ENCODE measurements at regions of chr2 and their contacts with region 1.

Region 1: GRCh38 chr2:189521699-189522434 is 58.7 kb downstream of the SLC40A1 start:
- DNase-seq: no peak
- ATAC-seq: no peak
- H3K4me3 ChIP-seq: no peak overlapping the region
- H3K27ac ChIP-seq: peak overlapping the region in 6 of 12 donors; percentile 4 to 72 (median 32)
- H3K4me1 ChIP-seq: peaks cover 0 to 25% (median 9%) of the 10 kb centered on the region in 12 donors
- H3K27me3 ChIP-seq: no peaks in the 10 kb centered on the region
- CTCF ChIP-seq: peak in 1 of 12 donors; percentile 12
- POLR2A ChIP-seq: no peak

Region 2: DNA sequence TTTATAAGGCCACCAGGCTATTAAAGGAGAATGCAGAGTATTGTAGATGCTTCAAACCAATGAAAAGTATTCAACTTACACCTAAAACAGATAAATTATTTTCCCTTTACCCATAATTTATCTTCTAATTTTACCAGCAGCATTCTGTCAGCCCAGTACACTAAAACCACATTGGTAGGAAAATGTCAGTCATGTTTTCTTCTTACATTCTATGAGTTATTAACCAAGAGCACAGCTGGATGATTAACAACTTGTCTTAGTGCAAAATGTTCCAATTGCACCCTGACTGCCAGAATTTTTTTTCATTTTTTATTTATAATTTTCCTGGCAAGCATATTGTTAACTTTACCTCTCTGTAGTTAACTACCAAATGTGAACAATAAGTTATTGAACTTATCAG is 159.6 kb before region 1 on chr2:
- intact Hi-C with region 1: no loop called
- DNase-seq: no peak
- ATAC-seq: no peak
- H3K4me3 ChIP-seq: no peak overlapping the region
- H3K27ac ChIP-seq: peak overlapping the region in 3 of 12 donors; percentile 5 to 30 (median 28)
- H3K4me1 ChIP-seq: no peaks in the 10 kb centered on the region
- H3K27me3 ChIP-seq: no peaks in the 10 kb centered on the region
- CTCF ChIP-seq: no peak
- POLR2A ChIP-seq: no peak

Region 3: GRCh38 chr2:189549449-189549832 is 27.6 kb after region 1 on chr2:
- intact Hi-C with region 1: no loop called
- DNase-seq: peak in 4 of 5 donors; percentile 34 to 67 (median 53)
- ATAC-seq: peak; percentile 31 to 71 (median 53)
- H3K4me3 ChIP-seq: no peak overlapping the region
- H3K27ac ChIP-seq: peak overlapping the region in 10 of 12 donors; percentile 40 to 88 (median 54)
- H3K4me1 ChIP-seq: peaks cover 0 to 73% (median 33%) of the 10 kb centered on the region in 12 donors
- H3K27me3 ChIP-seq: no peaks in the 10 kb centered on the region
- CTCF ChIP-seq: no peak
- POLR2A ChIP-seq: no peak

Region 4: GRCh38 chr2:189569295-189569910 is 47.5 kb after region 1 on chr2:
- intact Hi-C with region 1: loop called in 1 of 10 experiments (anchors 5 kb)
- DNase-seq: peak in 1 of 5 donors; percentile 39
- ATAC-seq: peak in 2 of 4 donors; percentile 59 to 72
- H3K4me3 ChIP-seq: no peak overlapping the region
- H3K27ac ChIP-seq: peak overlapping the region in 10 of 12 donors; percentile 19 to 65 (median 46)
- H3K4me1 ChIP-seq: peaks cover 3 to 80% (median 29%) of the 10 kb centered on the region in 12 donors
- H3K27me3 ChIP-seq: no peaks in the 10 kb centered on the region
- CTCF ChIP-seq: peak in 5 of 12 donors; percentile 17 to 44 (median 26)
- POLR2A ChIP-seq: no peak

Region 5: DNA sequence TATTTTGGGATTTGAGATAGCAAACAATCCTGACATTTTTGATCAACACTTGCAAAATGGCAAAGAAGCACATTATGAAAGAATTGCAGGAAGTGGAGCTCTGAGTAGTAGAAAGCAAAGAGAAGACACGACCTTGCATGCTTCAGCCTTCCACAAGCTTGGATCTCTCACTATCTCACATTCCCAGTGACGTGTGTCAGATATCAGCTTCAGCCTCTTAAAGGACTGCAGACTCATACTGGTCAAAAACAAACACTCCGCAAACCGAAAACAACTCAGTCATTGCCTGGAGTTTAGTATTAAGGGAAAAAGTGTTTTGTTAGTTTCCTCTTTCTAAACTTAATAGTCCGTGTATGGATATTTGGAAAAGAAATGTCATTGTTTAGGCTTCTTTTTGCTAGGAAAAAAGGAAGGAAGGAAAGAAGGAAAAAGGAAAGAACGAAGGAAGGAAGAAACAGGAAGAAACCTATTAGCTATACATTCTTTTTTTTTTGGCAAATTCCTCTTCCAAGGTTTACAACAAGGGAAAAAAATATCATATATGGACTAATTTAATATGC is 91.3 kb after region 1 on chr2:
- intact Hi-C with region 1: no loop called
- DNase-seq: peak in 4 of 5 donors; percentile 32 to 55 (median 41)
- ATAC-seq: peak; percentile 96 to 98 (median 97)
- H3K4me3 ChIP-seq: peak overlapping the region in 10 of 12 donors; percentile 9 to 39 (median 27)
- H3K27ac ChIP-seq: peak overlapping the region; percentile 50 to 86 (median 77)
- H3K4me1 ChIP-seq: peaks cover 0 to 29% (median 17%) of the 10 kb centered on the region in 12 donors
- H3K27me3 ChIP-seq: no peaks in the 10 kb centered on the region
- CTCF ChIP-seq: no peak
- POLR2A ChIP-seq: no peak